ENCODE measurements at regions of chr1 and their contacts with region 1.

Region 1: GRCh38 chr1:114219172-114219868 is 65.7 kb upstream of the SYT6 start:
- DNase-seq: no peak
- H3K4me3 ChIP-seq: no peak overlapping the region
- H3K27ac ChIP-seq: peak overlapping the region in 1 of 2 donors; percentile 10
- H3K4me1 ChIP-seq: peaks cover 9% of the 10 kb centered on the region
- H3K27me3 ChIP-seq: no peaks in the 10 kb centered on the region
- CTCF ChIP-seq: no peak
- EP300 ChIP-seq: no peak
- POLR2A ChIP-seq: no peak

Region 2: GRCh38 chr1:113226148-113226547 is 993.2 kb before region 1 on chr1:
- intact Hi-C with region 1: no loop called
- DNase-seq: peak in 4 of 5 donors; percentile 22 to 55 (median 51)
- H3K4me3 ChIP-seq: no peak overlapping the region
- H3K27ac ChIP-seq: peak overlapping the region in 1 of 2 donors; percentile 69
- H3K4me1 ChIP-seq: peaks cover 4% of the 10 kb centered on the region
- H3K27me3 ChIP-seq: no peaks in the 10 kb centered on the region
- CTCF ChIP-seq: no peak
- EP300 ChIP-seq: no peak
- POLR2A ChIP-seq: no peak

Region 3: GRCh38 chr1:114002492-114003239 is 216.7 kb before region 1 on chr1:
- intact Hi-C with region 1: loop called in 1 of 4 experiments (anchors 10 kb)
- DNase-seq: peak in 4 of 5 donors; percentile 22 to 42 (median 32)
- H3K4me3 ChIP-seq: no peak overlapping the region
- H3K27ac ChIP-seq: peak overlapping the region in 1 of 2 donors; percentile 48
- H3K4me1 ChIP-seq: peaks cover 5% of the 10 kb centered on the region
- H3K27me3 ChIP-seq: no peaks in the 10 kb centered on the region
- CTCF ChIP-seq: no peak
- EP300 ChIP-seq: no peak
- POLR2A ChIP-seq: no peak

Region 4: DNA sequence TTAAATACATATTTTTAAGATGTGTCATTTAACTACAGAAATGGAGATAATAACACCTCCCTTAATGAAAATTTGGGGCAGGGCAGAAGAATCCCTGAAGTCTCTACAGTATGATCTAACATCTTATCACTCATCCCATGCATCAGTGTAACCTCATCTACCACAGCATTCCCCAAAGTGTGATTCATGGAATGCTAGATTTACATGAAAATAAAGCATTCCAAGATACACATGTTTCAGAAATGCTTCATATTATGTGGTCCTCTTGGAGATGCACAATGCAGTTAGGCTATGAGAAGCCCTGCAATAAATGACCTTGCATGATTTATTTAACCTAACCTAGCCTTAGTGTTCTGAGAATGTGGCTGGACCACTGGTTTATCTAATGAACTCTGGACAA is 101.3 kb after region 1 on chr1:
- intact Hi-C with region 1: no loop called
- DNase-seq: no peak
- H3K4me3 ChIP-seq: no peak overlapping the region
- H3K27ac ChIP-seq: no peak overlapping the region
- H3K4me1 ChIP-seq: no peaks in the 10 kb centered on the region
- H3K27me3 ChIP-seq: no peaks in the 10 kb centered on the region
- CTCF ChIP-seq: no peak
- EP300 ChIP-seq: no peak
- POLR2A ChIP-seq: no peak